CD4-positive, alpha-beta T cell (primary cell): ENCODE measurements at regions of chr7 and their contacts with region 1.

Region 1: DNA sequence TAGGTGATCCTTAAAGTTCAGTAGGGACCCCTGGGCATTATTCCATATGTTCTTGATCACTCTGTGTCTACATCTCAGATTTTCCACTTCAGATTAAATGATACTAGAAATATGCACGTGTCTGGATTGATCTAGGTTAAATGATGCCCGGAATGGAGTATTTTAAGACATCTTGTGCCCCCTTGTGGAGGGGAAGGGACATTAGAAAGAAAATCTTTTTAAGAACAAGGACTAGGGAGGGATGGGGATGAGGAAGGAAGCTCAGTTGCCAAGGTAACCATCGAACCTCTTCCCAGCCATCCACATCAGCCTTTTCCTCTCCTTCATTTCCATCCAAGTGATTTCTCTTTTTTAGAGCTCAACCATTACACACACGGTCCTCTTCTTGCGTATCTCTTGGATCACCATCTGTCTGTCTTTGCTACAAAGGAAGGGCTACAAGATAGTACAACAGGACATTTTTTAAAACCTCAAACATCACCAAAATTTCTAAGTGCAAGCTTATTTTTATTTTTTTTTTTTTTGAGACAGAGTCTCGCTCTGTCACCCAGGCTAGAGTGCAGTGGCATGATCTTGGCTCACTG is 40.5 kb downstream of the PRSS2 start:
- DNase-seq: peak in 4 of 14 experiments; percentile 59 to 87 (median 86)
- ATAC-seq: no peak
- H3K4me3 ChIP-seq: no peak overlapping the region
- H3K4me3 Mint-ChIP-seq: peak overlapping the region; percentile 62
- H3K27ac ChIP-seq: peak overlapping the region; percentile 95 to 99
- H3K27ac Mint-ChIP-seq: peak overlapping the region; percentile 98
- H3K4me1 ChIP-seq: peaks cover 77% of the 10 kb centered on the region
- H3K4me1 Mint-ChIP-seq: peaks cover 99% of the 10 kb centered on the region
- H3K27me3 ChIP-seq: no peaks in the 10 kb centered on the region
- H3K27me3 Mint-ChIP-seq: no peaks in the 10 kb centered on the region
- CTCF ChIP-seq: peak; percentile 78

Region 2: GRCh38 chr7:142313528-142313927 is 497.7 kb before region 1 on chr7:
- CTCF ChIA-PET with region 1: no interaction called
- POLR2A ChIA-PET with region 1: interaction called, 87 read pairs
- intact Hi-C with region 1: no loop called
- DNase-seq: peak in 9 of 14 experiments; percentile 35 to 64 (median 52)
- ATAC-seq: peak; percentile 91
- H3K4me3 ChIP-seq: peak overlapping the region; percentile 2
- H3K4me3 Mint-ChIP-seq: peak overlapping the region; percentile 65
- H3K27ac ChIP-seq: no peak overlapping the region
- H3K27ac Mint-ChIP-seq: peak overlapping the region; percentile 58
- H3K4me1 ChIP-seq: peaks cover 15% of the 10 kb centered on the region
- H3K4me1 Mint-ChIP-seq: peaks cover 18% of the 10 kb centered on the region
- H3K27me3 ChIP-seq: peaks cover 0 to 7% of the 10 kb centered on the region in 2 experiments
- H3K27me3 Mint-ChIP-seq: peaks cover 4% of the 10 kb centered on the region
- CTCF ChIP-seq: no peak

Region 3: GRCh38 chr7:142478479-142479072 is 332.7 kb before region 1 on chr7:
- CTCF ChIA-PET with region 1: interaction called, 4 read pairs
- POLR2A ChIA-PET with region 1: interaction called, 15 read pairs
- intact Hi-C with region 1: no loop called
- DNase-seq: peak in 6 of 14 experiments; percentile 7 to 72 (median 48)
- ATAC-seq: peak; percentile 27
- H3K4me3 ChIP-seq: no peak overlapping the region
- H3K4me3 Mint-ChIP-seq: peak overlapping the region; percentile 63
- H3K27ac ChIP-seq: peak overlapping the region; percentile 4 to 48
- H3K27ac Mint-ChIP-seq: peak overlapping the region; percentile 91
- H3K4me1 ChIP-seq: peaks cover 70% of the 10 kb centered on the region
- H3K4me1 Mint-ChIP-seq: peaks cover 89% of the 10 kb centered on the region
- H3K27me3 ChIP-seq: no peaks in the 10 kb centered on the region
- H3K27me3 Mint-ChIP-seq: no peaks in the 10 kb centered on the region
- CTCF ChIP-seq: peak; percentile 67

Region 4: DNA sequence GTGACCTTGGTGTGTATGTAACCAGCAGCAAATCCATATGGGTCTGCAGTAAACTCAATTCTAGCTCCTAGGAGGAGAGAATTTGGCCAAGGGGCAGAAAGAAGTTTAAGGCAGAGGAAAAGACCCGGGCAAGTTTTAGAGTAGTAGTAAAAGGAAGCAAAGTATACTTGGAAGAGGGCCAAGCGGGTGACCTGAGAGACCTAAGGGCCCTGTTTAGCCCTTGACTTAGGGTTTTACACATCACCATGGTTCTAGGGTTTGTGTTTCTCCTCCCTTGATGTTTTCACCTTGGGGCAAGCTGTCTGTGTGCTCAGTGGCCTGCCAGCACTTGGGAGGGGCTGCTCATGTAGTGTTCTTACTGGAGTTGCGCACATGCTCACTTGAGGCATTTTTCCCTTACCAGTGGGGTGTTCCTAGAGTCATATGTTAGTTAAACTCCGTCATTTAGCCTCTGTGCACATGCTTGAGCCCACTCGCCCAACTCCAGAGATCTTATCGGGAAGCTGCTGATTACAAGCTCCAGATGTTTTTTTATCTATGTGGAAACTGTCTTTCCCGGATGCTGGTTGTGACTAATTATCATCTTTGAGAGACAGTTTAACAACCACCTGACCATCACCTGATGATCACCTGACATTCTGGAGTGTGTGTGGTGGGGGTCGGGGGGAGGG is 199.5 kb before region 1 on chr7:
- CTCF ChIA-PET with region 1: interaction called, 3 read pairs
- POLR2A ChIA-PET with region 1: interaction called, 60 read pairs
- intact Hi-C with region 1: no loop called
- DNase-seq: peak in 2 of 14 experiments; percentile 11 to 17
- ATAC-seq: no peak
- H3K4me3 ChIP-seq: no peak overlapping the region
- H3K4me3 Mint-ChIP-seq: no peak overlapping the region
- H3K27ac ChIP-seq: no peak overlapping the region
- H3K27ac Mint-ChIP-seq: peak overlapping the region; percentile 59
- H3K4me1 ChIP-seq: peaks cover 4% of the 10 kb centered on the region
- H3K4me1 Mint-ChIP-seq: peaks cover 17% of the 10 kb centered on the region
- H3K27me3 ChIP-seq: no peaks in the 10 kb centered on the region
- H3K27me3 Mint-ChIP-seq: no peaks in the 10 kb centered on the region
- CTCF ChIP-seq: no peak

Region 5: DNA sequence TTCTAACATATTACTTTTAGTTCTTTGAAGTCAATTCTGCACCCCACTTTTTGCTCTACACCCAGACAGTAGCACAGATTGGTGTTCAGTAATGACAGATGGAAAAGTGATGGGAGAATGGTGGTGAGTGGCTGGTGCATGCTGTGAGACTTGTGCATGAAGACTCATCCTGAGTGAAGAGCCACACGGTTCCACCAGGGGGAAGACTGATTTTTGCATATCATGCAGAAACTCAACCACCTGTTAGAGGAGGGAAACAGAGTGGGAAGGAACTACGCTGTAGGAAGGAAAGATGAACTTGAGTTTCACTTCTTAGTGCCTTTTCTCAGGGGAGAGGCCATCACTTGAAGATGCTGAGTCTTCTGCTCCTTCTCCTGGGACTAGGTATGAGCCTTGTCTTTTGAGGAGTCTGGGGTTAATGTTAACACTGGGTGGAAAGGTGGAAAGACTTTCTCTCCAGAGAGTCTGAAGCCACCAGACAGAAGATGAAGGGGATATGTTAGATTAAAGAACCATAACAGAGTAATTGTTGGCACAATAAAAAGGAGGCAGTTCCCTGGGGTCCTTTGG is 71.2 kb before region 1 on chr7:
- CTCF ChIA-PET with region 1: no interaction called
- POLR2A ChIA-PET with region 1: no interaction called
- intact Hi-C with region 1: loop called in 1 of 2 experiments (anchors 2 kb)
- DNase-seq: peak in 3 of 14 experiments; percentile 21 to 49 (median 46)
- ATAC-seq: peak; percentile 68
- H3K4me3 ChIP-seq: peak overlapping the region; percentile 24
- H3K4me3 Mint-ChIP-seq: peak overlapping the region; percentile 67
- H3K27ac ChIP-seq: no peak overlapping the region
- H3K27ac Mint-ChIP-seq: peak overlapping the region; percentile 34
- H3K4me1 ChIP-seq: no peaks in the 10 kb centered on the region
- H3K4me1 Mint-ChIP-seq: peaks cover 5% of the 10 kb centered on the region
- H3K27me3 ChIP-seq: no peaks in the 10 kb centered on the region
- H3K27me3 Mint-ChIP-seq: no peaks in the 10 kb centered on the region
- CTCF ChIP-seq: no peak

Region 6: GRCh38 chr7:142859829-142860228 is 48.6 kb after region 1 on chr7:
- CTCF ChIA-PET with region 1: interaction called, 11 read pairs
- POLR2A ChIA-PET with region 1: interaction called, 33 read pairs
- intact Hi-C with region 1: loop called in 1 of 2 experiments (anchors 10 kb)
- DNase-seq: no peak
- ATAC-seq: no peak
- H3K4me3 ChIP-seq: no peak overlapping the region
- H3K4me3 Mint-ChIP-seq: peak overlapping the region; percentile 39
- H3K27ac ChIP-seq: no peak overlapping the region
- H3K27ac Mint-ChIP-seq: peak overlapping the region; percentile 12
- H3K4me1 ChIP-seq: peaks cover 24% of the 10 kb centered on the region
- H3K4me1 Mint-ChIP-seq: peaks cover 48% of the 10 kb centered on the region
- H3K27me3 ChIP-seq: no peaks in the 10 kb centered on the region
- H3K27me3 Mint-ChIP-seq: no peaks in the 10 kb centered on the region
- CTCF ChIP-seq: no peak

Region 7: GRCh38 chr7:142974626-142975025 is 163.4 kb after region 1 on chr7:
- CTCF ChIA-PET with region 1: no interaction called
- POLR2A ChIA-PET with region 1: no interaction called
- intact Hi-C with region 1: no loop called
- DNase-seq: no peak
- ATAC-seq: no peak
- H3K4me3 ChIP-seq: no peak overlapping the region
- H3K4me3 Mint-ChIP-seq: no peak overlapping the region
- H3K27ac ChIP-seq: no peak overlapping the region
- H3K27ac Mint-ChIP-seq: no peak overlapping the region
- H3K4me1 ChIP-seq: no peaks in the 10 kb centered on the region
- H3K4me1 Mint-ChIP-seq: no peaks in the 10 kb centered on the region
- H3K27me3 ChIP-seq: peaks cover 3 to 9% of the 10 kb centered on the region in 2 experiments
- H3K27me3 Mint-ChIP-seq: peaks cover 23% of the 10 kb centered on the region
- CTCF ChIP-seq: no peak